ENCODE measurements at regions of chr13 and their contacts with region 1.

Region 1: GRCh38 chr13:97395447-97396136 is 38.4 kb upstream of the RAP2A start:
- DNase-seq: no peak
- ATAC-seq: peak; percentile 68
- H3K4me3 ChIP-seq: no peak overlapping the region
- H3K27ac ChIP-seq: no peak overlapping the region
- H3K4me1 ChIP-seq: no peaks in the 10 kb centered on the region; a peak in 2 of 5 replicates
- H3K27me3 ChIP-seq: no peaks in the 10 kb centered on the region
- CTCF ChIP-seq: no peak
- EP300 ChIP-seq: no peak
- POLR2A ChIP-seq: no peak
- RAD21 ChIP-seq: no peak

Region 2: GRCh38 chr13:95948656-95949055 is 1446.9 kb before region 1 on chr13:
- CTCF ChIA-PET with region 1: no interaction called
- POLR2A ChIA-PET with region 1: no interaction called
- in situ Hi-C with region 1: no loop called
- intact Hi-C with region 1: no loop called
- DNase-seq: no peak
- ATAC-seq: no peak
- H3K4me3 ChIP-seq: no peak overlapping the region
- H3K27ac ChIP-seq: no peak overlapping the region
- H3K4me1 ChIP-seq: no peaks in the 10 kb centered on the region
- H3K27me3 ChIP-seq: no peaks in the 10 kb centered on the region
- CTCF ChIP-seq: no peak
- EP300 ChIP-seq: no peak
- POLR2A ChIP-seq: no peak
- RAD21 ChIP-seq: no peak

Region 3: DNA sequence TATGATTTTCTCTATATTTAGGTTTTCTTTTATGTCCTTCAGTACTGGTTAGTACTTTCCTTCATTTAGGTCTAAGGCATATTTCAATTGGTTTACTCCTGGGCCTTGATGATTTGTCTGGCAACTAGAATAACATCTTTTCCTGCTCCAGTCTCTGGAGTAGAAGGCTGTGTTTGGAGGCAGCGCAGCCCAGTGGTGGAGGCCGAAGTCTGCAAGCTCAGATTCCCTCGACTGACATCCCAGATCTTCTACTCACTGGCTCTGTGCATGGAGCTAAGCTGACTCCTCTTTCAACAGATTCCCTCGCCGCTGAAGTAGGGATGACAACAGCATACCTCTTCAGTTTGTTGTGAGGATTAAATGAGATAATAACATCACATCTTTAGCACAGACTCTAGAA is 179.3 kb after region 1 on chr13:
- CTCF ChIA-PET with region 1: no interaction called
- POLR2A ChIA-PET with region 1: no interaction called
- in situ Hi-C with region 1: no loop called
- intact Hi-C with region 1: loop called (anchors 10 kb)
- DNase-seq: peak in 2 of 4 experiments; percentile 10 to 29
- ATAC-seq: peak; percentile 84
- H3K4me3 ChIP-seq: no peak overlapping the region
- H3K27ac ChIP-seq: no peak overlapping the region
- H3K4me1 ChIP-seq: no peaks in the 10 kb centered on the region
- H3K27me3 ChIP-seq: no peaks in the 10 kb centered on the region; a peak in 1 of 5 replicates
- CTCF ChIP-seq: peak; percentile 45 to 53 (median 48); a peak in 5 of 6 replicates
- EP300 ChIP-seq: no peak
- POLR2A ChIP-seq: no peak
- RAD21 ChIP-seq: peak; percentile 47 to 70

Region 4: GRCh38 chr13:97743938-97744337 is 348.3 kb after region 1 on chr13:
- CTCF ChIA-PET with region 1: no interaction called
- POLR2A ChIA-PET with region 1: no interaction called
- in situ Hi-C with region 1: no loop called
- intact Hi-C with region 1: no loop called
- DNase-seq: no peak
- ATAC-seq: no peak
- H3K4me3 ChIP-seq: no peak overlapping the region
- H3K27ac ChIP-seq: no peak overlapping the region
- H3K4me1 ChIP-seq: no peaks in the 10 kb centered on the region
- H3K27me3 ChIP-seq: no peaks in the 10 kb centered on the region
- CTCF ChIP-seq: no peak
- EP300 ChIP-seq: no peak
- POLR2A ChIP-seq: no peak
- RAD21 ChIP-seq: no peak

Measured in K562 (cell line).